Cardiac septum (tissue), 1 donor: ENCODE measurements at regions of chr7 and their contacts with region 1.

Region 1: DNA sequence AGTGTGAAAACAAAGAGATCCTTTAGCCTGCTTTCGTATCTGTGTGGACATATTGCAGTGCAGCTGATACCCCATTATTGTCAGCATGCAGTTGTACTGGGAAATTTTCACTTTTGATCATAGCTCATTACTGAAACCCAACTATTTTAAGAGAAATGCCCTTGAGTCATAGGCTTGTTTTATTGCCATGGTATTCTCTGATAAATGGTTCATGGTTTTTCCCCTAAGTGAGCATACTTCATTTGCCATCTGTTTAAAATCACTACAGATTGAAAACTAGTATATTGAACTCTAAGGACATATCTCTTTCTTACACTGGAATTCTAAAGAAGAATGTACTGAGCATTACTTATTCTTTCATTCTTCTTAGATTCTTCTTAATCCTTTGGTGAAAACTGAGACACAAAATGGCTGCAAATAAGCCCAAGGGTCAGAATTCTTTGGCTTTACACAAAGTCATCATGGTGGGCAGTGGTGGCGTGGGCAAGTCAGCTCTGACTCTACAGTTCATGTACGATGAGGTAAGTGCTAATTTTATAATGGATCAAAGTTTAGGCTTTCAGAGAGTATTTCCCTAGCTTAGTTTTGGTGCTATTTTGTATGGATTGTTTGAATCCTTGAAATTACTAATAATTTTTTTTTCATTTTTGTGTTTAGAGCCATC is 63.0 kb downstream of the RALA start:
- DNase-seq: no peak

Region 2: DNA sequence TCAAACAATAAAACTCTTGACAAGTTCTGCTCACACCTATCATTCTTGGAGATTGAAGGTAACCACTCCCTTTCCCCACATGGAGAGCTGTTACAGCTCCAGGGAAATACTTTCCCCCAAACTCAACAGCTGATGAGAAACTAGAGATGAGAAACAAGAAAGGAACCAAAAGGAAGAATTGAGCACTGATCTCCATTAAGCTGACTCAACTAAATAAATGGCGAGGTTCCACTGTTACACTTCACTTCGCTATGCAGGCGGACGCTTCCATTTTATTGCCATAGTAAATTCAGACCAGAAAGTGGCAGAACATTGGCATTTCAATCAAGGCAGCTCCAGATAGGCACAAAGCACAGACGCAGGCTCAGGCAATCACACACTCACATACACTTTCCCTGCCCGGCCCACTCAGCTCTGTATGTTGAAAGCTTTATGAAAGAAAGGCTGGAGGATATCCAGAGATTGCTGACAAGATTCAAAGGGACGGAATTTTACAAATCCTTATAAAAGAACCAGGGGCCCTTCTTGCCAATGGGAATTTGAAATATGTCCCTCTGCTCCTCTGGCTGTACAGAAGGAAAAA is 131.7 kb before region 1 on chr7:
- intact Hi-C with region 1: no loop called
- DNase-seq: no peak

Region 3: GRCh38 chr7:39650676-39651075 is 35.7 kb before region 1 on chr7:
- intact Hi-C with region 1: no loop called
- DNase-seq: no peak

Region 4: DNA sequence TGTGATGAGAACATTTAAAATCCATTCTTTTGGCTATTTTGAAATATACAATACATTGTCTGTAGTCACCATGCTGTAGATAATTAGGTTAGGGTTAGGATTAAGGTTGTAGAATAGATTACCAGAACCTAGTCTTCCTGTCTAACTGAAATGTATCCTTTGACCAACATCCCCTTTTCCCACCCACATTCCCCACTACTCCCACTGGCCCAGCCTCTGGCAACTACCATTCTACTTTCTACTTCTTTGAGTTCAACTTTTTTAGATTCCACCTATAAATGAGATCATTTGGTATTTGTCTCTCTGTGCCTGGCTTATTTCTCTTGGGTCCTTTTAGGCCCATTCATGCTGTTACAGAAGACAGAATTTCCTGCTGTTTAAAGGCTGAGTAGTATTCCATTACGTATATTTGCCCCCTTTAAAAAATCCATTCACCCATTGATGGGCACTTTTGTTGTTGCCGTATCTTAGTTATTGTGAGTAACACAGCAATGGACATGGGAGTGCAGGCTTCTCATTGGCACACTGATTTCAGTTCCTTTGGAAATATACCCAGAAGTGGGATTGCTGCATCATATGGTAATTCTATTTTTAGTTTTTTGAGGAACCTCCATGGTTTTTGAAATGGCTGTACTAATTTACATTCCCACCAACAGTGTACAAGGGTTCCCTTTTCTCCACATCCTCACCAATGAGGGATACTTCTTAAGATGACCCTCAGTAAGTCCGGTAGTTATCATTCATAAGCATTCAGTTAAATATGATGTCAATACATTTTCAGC is 41.0 kb after region 1 on chr7:
- intact Hi-C with region 1: loop called (anchors 5 kb)
- DNase-seq: no peak